Stomach (tissue), 19 donors: ENCODE measurements at regions of chr18 and their contacts with region 1.

Region 1: GRCh38 chr18:12038639-12039417 is 54.8 kb upstream of the ANKRD62 start:
- DNase-seq: peak; percentile 90 to 93
- H3K4me3 ChIP-seq: peak overlapping the region; percentile 53 to 65 (median 56)
- H3K27ac ChIP-seq: peak overlapping the region in 3 of 5 donors; percentile 39 to 71 (median 55)
- H3K4me1 ChIP-seq: peaks cover 11 to 17% (median 15%) of the 10 kb centered on the region in 4 donors
- H3K27me3 ChIP-seq: peaks cover 0 to 10% (median 0%) of the 10 kb centered on the region in 3 donors
- CTCF ChIP-seq: peak in 6 of 7 experiments; percentile 66 to 100 (median 98)
- EP300 ChIP-seq: no peak
- POLR2A ChIP-seq: no peak

Region 2: DNA sequence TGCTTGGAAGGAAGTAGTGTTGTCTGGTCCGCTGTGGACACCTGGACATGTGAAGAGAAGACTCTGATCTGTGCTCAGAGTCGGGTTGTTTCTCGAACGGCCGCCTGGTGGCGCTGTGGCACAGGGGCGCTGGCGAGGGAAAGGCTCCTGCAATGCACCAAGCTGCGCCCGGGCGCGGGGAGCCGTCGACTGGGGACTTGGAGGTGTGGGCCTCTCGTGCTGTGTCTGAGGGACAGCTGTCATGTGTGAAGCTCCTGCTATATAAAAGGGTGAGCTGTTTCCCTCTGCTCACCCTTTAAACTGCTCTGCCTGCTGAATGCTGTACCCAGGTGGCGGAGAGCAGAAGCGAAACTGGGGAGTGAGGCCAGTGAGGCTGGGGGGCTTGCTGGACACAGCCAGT is 305.8 kb before region 1 on chr18:
- intact Hi-C with region 1: loop called (anchors 5 kb)
- DNase-seq: peak; percentile 81 to 88
- H3K4me3 ChIP-seq: peak overlapping the region; percentile 19 to 35 (median 26)
- H3K27ac ChIP-seq: no peak overlapping the region
- H3K4me1 ChIP-seq: peaks cover 0 to 9% (median 7%) of the 10 kb centered on the region in 4 donors
- H3K27me3 ChIP-seq: peaks cover 0 to 11% (median 5%) of the 10 kb centered on the region in 3 donors
- CTCF ChIP-seq: peak in 5 of 7 experiments; percentile 70 to 92 (median 80)
- EP300 ChIP-seq: no peak
- POLR2A ChIP-seq: no peak

Region 3: GRCh38 chr18:11937874-11938478 is 100.9 kb before region 1 on chr18:
- intact Hi-C with region 1: loop called (anchors 10 kb)
- DNase-seq: peak; percentile 87 to 90
- H3K4me3 ChIP-seq: no peak overlapping the region
- H3K27ac ChIP-seq: no peak overlapping the region
- H3K4me1 ChIP-seq: no peaks in the 10 kb centered on the region
- H3K27me3 ChIP-seq: no peaks in the 10 kb centered on the region
- CTCF ChIP-seq: peak in 5 of 7 experiments; percentile 44 to 88 (median 76)
- EP300 ChIP-seq: no peak
- POLR2A ChIP-seq: no peak

Region 4: GRCh38 chr18:12113999-12114646 is 75.3 kb after region 1 on chr18:
- intact Hi-C with region 1: no loop called
- DNase-seq: no peak
- H3K4me3 ChIP-seq: no peak overlapping the region
- H3K27ac ChIP-seq: no peak overlapping the region
- H3K4me1 ChIP-seq: no peaks in the 10 kb centered on the region
- H3K27me3 ChIP-seq: no peaks in the 10 kb centered on the region
- CTCF ChIP-seq: no peak
- EP300 ChIP-seq: no peak
- POLR2A ChIP-seq: no peak